ENCODE measurements at regions of chr7 and their contacts with region 1.

Region 1: GRCh38 chr7:24158975-24159374 is 125.0 kb upstream of the NPY start:
- DNase-seq: peak; percentile 98
- H3K4me3 ChIP-seq: no peak overlapping the region
- H3K27ac ChIP-seq: peak overlapping the region; percentile 49
- H3K4me1 ChIP-seq: peaks cover 26% of the 10 kb centered on the region
- H3K27me3 ChIP-seq: no peaks in the 10 kb centered on the region
- CTCF ChIP-seq: no peak

Region 2: DNA sequence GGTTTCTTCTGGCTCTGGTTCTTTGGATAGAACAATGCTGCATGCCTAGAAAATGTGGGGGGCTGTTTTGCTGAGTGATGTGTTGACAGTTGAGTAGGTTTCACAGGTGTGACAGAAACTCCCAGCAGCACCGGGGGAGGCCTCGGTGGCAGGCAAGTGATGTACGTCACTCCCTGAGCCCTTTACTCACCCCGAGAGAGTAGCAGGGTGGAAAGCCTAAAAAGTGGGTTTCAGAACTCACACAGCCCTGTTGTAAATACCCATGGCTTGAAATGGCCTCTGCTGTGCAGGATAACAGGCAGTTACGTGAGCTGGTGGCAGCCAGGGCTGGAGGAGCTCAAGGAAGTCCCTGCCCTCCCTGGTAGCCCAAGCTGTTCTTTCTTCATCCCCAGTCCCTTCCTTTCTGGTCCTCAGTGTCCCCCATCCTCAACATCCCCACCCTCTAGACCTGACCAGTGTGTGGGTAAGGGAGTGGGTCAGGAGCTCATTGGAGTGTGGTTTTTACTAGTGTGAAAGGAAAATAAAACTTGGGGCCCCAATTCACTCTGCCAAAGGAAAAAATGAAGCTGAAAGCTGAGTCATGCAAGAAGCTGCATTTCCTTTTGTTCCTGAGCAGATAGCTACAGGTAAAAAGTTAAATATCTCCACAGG is 190.9 kb before region 1 on chr7:
- CTCF ChIA-PET with region 1: no interaction called
- POLR2A ChIA-PET with region 1: no interaction called
- intact Hi-C with region 1: no loop called
- DNase-seq: no peak
- H3K4me3 ChIP-seq: no peak overlapping the region
- H3K27ac ChIP-seq: no peak overlapping the region
- H3K4me1 ChIP-seq: no peaks in the 10 kb centered on the region
- H3K27me3 ChIP-seq: no peaks in the 10 kb centered on the region
- CTCF ChIP-seq: no peak

Region 3: DNA sequence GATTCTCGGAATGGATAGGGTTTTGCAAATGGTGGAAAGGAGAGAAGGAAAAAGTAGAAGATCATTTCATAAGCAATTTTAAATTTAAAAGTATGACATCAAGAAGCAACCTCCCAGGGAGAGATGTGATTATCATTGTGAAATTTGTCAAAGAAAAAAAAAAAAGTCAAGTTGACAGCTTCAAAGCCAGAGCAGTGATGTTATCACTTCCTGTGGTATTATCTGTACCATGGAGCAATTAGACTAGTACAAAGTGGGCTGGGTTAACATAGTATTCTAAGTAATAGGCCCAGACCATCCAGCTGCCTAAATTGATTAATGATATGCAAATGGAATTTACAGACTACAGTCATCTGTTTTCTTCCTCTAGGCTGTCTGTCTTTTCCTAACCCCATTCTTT is 41.0 kb after region 1 on chr7:
- CTCF ChIA-PET with region 1: no interaction called
- POLR2A ChIA-PET with region 1: no interaction called
- intact Hi-C with region 1: loop called (anchors 2 kb)
- DNase-seq: peak; percentile 95
- H3K4me3 ChIP-seq: peak overlapping the region; percentile 21
- H3K27ac ChIP-seq: peak overlapping the region; percentile 75
- H3K4me1 ChIP-seq: peaks cover 26% of the 10 kb centered on the region
- H3K27me3 ChIP-seq: no peaks in the 10 kb centered on the region
- CTCF ChIP-seq: no peak